Endothelial cell of umbilical vein (primary cell): ENCODE measurements at regions of chr6 and their contacts with region 1.

Region 1: DNA sequence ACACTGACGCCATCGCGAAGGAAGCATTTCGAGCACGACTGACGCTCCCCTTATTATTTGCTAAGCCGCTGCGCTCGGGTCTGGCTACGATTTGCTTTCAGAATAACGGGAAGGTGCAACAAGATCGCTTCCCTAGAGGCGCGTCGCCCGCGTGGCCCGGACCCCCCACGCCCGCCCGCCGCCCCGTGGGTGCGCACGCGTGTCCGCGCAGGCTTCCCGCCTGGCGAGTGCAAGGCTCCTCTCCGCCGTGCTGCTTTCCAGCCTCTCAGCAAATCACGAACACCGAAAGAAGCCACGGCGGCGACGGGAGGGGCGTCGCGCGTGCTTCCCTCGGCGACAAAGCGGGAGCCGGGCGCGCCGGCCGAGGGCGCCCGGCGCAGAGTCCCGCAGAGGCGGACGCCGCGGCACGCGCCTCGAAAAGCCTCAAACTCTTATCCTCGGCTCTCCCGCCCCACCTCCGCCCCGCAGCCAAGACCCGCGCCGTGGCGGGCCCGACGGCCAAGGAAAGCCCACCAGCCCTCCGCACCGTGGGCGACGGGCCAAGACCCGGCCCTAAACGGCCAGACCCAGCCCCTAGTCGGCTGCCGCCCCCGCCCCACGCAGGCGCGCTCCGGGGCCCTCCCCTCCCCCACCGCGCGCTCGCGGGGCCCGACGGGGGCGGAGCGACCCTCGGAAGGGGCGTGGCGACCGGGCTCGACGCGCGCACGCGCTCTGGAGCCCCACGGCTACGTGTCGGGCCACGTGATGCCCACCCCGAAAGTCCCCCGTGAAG is 987 bp upstream of the QKI start:
- DNase-seq: peak; percentile 93
- H3K4me3 ChIP-seq: peak overlapping the region; percentile 64 to 92 (median 70)
- H3K27ac ChIP-seq: peak overlapping the region; percentile 85
- H3K4me1 ChIP-seq: peaks cover 20% of the 10 kb centered on the region
- H3K27me3 ChIP-seq: no peaks in the 10 kb centered on the region
- CTCF ChIP-seq: no peak
- POLR2A ChIP-seq: peak; percentile 1

Region 2: GRCh38 chr6:162907876-162908481 is 505.6 kb before region 1 on chr6:
- CTCF ChIA-PET with region 1: no interaction called
- POLR2A ChIA-PET with region 1: no interaction called
- dilution Hi-C with region 1: no loop called
- intact Hi-C with region 1: loop called (anchors 2 kb)
- DNase-seq: peak; percentile 22
- H3K4me3 ChIP-seq: no peak overlapping the region
- H3K27ac ChIP-seq: no peak overlapping the region
- H3K4me1 ChIP-seq: no peaks in the 10 kb centered on the region
- H3K27me3 ChIP-seq: no peaks in the 10 kb centered on the region
- CTCF ChIP-seq: no peak
- POLR2A ChIP-seq: no peak

Region 3: DNA sequence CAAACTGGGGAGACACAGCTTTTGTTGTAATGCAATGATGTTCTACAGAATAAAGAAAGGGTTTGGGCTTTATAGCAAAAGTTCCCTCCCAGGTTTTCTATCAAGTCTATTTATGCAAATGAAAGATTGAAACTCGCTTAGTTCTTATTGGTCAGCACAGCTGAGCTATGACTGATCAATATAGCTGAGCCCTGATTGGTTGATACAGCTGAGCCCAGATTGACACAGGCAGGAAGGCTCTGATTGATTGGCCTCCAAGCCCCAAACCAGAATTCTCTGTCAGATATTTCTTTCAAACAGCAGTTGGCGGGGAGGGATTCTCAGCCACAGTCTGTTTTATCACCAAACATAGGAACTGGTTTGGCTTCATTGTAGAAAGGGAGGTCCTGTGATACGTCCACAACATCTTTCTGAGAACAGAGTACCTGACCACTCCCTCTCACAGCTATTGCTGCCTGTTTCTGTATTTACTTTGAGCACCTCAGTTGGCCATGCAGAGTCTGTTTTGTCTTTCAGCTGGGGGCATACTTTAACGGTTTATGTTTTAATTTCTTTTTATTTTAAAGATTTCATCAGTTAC is 462.3 kb before region 1 on chr6:
- CTCF ChIA-PET with region 1: no interaction called
- POLR2A ChIA-PET with region 1: no interaction called
- dilution Hi-C with region 1: no loop called
- intact Hi-C with region 1: no loop called
- DNase-seq: no peak
- H3K4me3 ChIP-seq: no peak overlapping the region
- H3K27ac ChIP-seq: no peak overlapping the region
- H3K4me1 ChIP-seq: no peaks in the 10 kb centered on the region
- H3K27me3 ChIP-seq: no peaks in the 10 kb centered on the region
- CTCF ChIP-seq: no peak
- POLR2A ChIP-seq: no peak

Region 4: DNA sequence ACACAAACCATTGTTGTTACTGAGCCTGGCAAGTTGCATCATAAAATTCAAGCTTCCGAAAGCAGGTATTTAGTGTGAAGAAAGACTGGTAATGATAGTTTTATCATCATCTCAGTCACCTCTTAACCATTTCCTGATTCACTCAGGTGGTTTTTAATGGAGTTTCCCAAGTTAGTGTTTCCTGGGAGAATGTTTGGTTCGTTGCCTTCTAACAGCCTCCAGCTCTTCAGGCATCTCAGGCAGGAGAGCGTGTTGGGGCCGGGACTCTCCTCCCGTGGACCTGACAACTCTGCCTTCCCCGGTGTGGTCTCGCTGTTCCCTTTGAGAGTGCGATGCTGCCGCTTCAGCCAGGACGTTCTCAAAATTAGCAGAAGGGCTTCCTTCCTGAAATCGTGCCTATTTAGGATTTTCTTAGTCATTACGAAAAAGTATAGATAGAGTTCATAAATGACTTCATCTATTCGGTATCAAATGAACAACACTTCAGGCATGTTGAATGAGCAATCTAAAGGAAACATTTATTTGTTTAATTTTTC is 104.0 kb before region 1 on chr6:
- CTCF ChIA-PET with region 1: no interaction called
- POLR2A ChIA-PET with region 1: no interaction called
- dilution Hi-C with region 1: no loop called
- intact Hi-C with region 1: loop called (anchors 1 kb)
- DNase-seq: peak; percentile 63
- H3K4me3 ChIP-seq: no peak overlapping the region
- H3K27ac ChIP-seq: peak overlapping the region; percentile 63
- H3K4me1 ChIP-seq: peaks cover 25% of the 10 kb centered on the region
- H3K27me3 ChIP-seq: no peaks in the 10 kb centered on the region
- CTCF ChIP-seq: no peak
- POLR2A ChIP-seq: no peak

Region 5: DNA sequence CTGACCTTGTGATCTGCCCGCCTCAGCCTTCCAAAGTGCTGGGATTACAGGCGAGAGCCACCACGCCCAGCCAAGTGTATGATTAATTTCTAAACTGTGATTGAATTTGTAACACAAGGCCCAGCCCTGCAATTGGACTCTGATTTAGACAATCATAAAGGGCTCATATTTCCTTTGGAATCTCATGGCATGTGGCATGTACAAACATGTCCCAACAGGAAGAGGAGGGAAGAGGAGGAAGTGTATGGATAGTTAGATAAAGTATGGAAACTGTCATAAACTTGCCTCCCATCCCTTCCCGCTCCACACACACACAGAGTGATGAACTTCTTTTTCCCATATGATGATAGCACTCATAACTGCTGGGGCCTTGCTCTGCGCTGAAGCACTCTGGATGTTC is 26.2 kb before region 1 on chr6:
- CTCF ChIA-PET with region 1: no interaction called
- POLR2A ChIA-PET with region 1: no interaction called
- dilution Hi-C with region 1: no loop called
- intact Hi-C with region 1: loop called (anchors 1 kb)
- DNase-seq: peak; percentile 95
- H3K4me3 ChIP-seq: no peak overlapping the region
- H3K27ac ChIP-seq: peak overlapping the region; percentile 9
- H3K4me1 ChIP-seq: peaks cover 12% of the 10 kb centered on the region
- H3K27me3 ChIP-seq: no peaks in the 10 kb centered on the region
- CTCF ChIP-seq: no peak
- POLR2A ChIP-seq: peak; percentile 39

Region 6: GRCh38 chr6:163956571-163957407 is 543.3 kb after region 1 on chr6:
- CTCF ChIA-PET with region 1: interaction called, 5 read pairs
- POLR2A ChIA-PET with region 1: no interaction called
- dilution Hi-C with region 1: no loop called
- intact Hi-C with region 1: loop called (anchors 1 kb)
- DNase-seq: peak; percentile 68
- H3K4me3 ChIP-seq: no peak overlapping the region
- H3K27ac ChIP-seq: no peak overlapping the region
- H3K4me1 ChIP-seq: peaks cover 4% of the 10 kb centered on the region
- H3K27me3 ChIP-seq: peaks cover 0 to 8% of the 10 kb centered on the region in 2 experiments
- CTCF ChIP-seq: peak; percentile 81 to 91
- POLR2A ChIP-seq: no peak

Region 7: DNA sequence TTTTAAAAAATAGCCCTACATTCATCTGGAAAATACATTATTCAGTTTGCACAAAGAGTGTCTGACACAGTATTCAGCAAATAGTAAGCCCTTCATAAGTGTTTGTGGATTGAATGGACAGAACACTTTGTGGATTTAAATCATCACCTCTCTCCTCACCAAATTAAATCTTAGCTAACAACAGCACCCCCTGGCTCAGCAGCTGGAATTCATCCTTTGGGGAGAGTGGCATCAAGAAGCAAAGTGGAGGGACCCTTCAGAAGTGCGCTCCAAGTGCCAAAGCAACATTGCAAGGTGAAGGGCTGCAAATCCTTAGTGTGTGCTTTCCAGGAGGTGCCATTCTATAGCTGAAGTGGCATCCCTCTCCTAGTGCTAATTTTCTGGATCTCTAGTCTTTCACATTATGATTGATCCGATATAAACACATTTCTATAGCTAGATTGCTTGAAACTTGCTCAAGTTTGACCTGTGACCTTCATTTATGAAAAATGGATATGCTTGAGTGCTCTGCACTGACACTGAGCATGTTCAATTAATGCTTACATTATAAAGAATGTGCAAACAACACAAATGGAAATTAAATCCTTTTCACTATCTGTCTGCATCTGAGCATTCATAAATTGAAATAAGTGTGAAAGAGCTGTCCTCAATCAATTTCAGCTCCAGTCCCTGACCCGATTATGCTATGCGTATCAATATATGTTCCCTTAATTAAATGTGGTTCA is 1004.2 kb after region 1 on chr6:
- CTCF ChIA-PET with region 1: no interaction called
- POLR2A ChIA-PET with region 1: no interaction called
- dilution Hi-C with region 1: no loop called
- intact Hi-C with region 1: loop called (anchors 10 kb)
- DNase-seq: no peak
- H3K4me3 ChIP-seq: no peak overlapping the region
- H3K27ac ChIP-seq: no peak overlapping the region
- H3K4me1 ChIP-seq: peaks cover 45% of the 10 kb centered on the region
- H3K27me3 ChIP-seq: no peaks in the 10 kb centered on the region
- CTCF ChIP-seq: no peak
- POLR2A ChIP-seq: no peak